Motor neuron (in vitro differentiated cells): ENCODE measurements at regions of chr17 and their contacts with region 1.

Region 1: GRCh38 chr17:77088455-77089123 is 52.2 kb upstream of the SEC14L1 start:
- ATAC-seq: peak; percentile 91 to 99 (median 96)
- H3K4me3 ChIP-seq: peak overlapping the region; percentile 70 to 97 (median 87)
- H3K27ac ChIP-seq: peak overlapping the region; percentile 93 to 96
- H3K4me1 ChIP-seq: peaks cover 17 to 18% of the 10 kb centered on the region in 2 donors

Region 2: GRCh38 chr17:77247048-77247541 is 158.5 kb after region 1 on chr17:
- in situ Hi-C with region 1: loop called in 8 of 9 experiments (anchors 5 to 25 kb)
- ATAC-seq: peak; percentile 85 to 98 (median 90)
- H3K4me3 ChIP-seq: peak overlapping the region; percentile 28 to 43 (median 40)
- H3K27ac ChIP-seq: no peak overlapping the region
- H3K4me1 ChIP-seq: peaks cover 8 to 14% of the 10 kb centered on the region in 2 donors